Activated naive CD4-positive, alpha-beta T cell treated with anti-CD3 and anti-CD28 coated beads for 36 hours (primary cell): ENCODE measurements at regions of chr7 and their contacts with region 1.

Region 1: GRCh38 chr7:43779032-43779812 is 20.7 kb downstream of the BLVRA start:
- DNase-seq: no peak
- H3K4me3 Mint-ChIP-seq: no peak overlapping the region
- H3K27ac Mint-ChIP-seq: no peak overlapping the region
- H3K4me1 Mint-ChIP-seq: peaks cover 9% of the 10 kb centered on the region
- H3K27me3 Mint-ChIP-seq: no peaks in the 10 kb centered on the region

Region 2: GRCh38 chr7:43764039-43764761 is 15.0 kb before region 1 on chr7:
- CTCF ChIA-PET with region 1: no interaction called
- intact Hi-C with region 1: loop called (anchors 1 kb)
- DNase-seq: peak; percentile 75
- H3K4me3 Mint-ChIP-seq: peak overlapping the region; percentile 47
- H3K27ac Mint-ChIP-seq: no peak overlapping the region
- H3K4me1 Mint-ChIP-seq: peaks cover 45% of the 10 kb centered on the region
- H3K27me3 Mint-ChIP-seq: no peaks in the 10 kb centered on the region